CD8-positive, alpha-beta memory T cell (primary cell): ENCODE measurements at regions of chr6 and their contacts with region 1.

Region 1: DNA sequence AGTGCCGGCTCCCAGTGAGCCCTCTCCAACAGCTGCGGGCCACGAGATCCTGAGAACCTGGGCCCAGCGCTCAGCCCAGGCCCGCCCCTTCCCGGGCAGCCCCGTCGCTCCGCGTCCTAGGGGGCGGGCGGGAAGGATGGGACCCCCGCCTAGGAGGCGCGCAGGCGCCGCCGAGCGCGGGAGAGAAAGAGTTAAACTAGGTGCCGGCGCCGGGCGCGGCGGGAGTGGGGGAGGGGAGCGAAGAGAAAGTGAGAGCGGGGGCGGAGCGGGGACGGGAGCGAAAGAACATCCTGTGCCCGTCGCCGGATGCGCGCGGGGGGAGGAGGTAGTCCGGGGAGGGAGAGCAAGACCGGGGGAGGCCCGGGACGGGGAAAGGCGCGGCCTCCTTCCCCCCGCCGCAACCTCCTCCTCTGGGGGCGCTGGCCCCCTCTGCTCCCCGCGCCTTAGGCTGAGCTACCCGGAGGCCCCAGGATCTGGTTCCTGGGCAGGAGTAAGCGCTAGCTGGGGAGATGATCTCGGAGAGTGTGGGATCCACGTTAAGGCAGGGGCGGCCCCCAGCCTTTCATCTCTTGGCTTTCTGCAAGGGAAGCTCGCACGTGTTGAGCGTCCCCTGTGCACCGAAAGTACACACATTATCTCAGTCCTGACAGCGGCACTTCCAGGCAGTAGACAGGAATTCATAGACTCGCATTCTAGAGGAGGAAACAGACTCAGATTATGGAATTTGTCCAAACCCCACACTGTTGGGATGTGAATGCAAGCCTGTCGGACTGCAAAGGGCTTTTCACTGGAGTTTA is 4.9 kb upstream of the ARMC12 start:
- DNase-seq: peak; percentile 88 to 97 (median 92)
- H3K4me3 ChIP-seq: peak overlapping the region; percentile 80
- H3K4me3 Mint-ChIP-seq: peak overlapping the region; percentile 84 to 94 (median 88)
- H3K27ac ChIP-seq: peak overlapping the region; percentile 87
- H3K27ac Mint-ChIP-seq: peak overlapping the region; percentile 88 to 98 (median 96)
- H3K4me1 ChIP-seq: peaks cover 82% of the 10 kb centered on the region
- H3K4me1 Mint-ChIP-seq: peaks cover 66 to 91% (median 74%) of the 10 kb centered on the region in 3 donors
- H3K27me3 ChIP-seq: no peaks in the 10 kb centered on the region
- H3K27me3 Mint-ChIP-seq: peaks cover 0 to 4% of the 10 kb centered on the region in 2 donors

Region 2: DNA sequence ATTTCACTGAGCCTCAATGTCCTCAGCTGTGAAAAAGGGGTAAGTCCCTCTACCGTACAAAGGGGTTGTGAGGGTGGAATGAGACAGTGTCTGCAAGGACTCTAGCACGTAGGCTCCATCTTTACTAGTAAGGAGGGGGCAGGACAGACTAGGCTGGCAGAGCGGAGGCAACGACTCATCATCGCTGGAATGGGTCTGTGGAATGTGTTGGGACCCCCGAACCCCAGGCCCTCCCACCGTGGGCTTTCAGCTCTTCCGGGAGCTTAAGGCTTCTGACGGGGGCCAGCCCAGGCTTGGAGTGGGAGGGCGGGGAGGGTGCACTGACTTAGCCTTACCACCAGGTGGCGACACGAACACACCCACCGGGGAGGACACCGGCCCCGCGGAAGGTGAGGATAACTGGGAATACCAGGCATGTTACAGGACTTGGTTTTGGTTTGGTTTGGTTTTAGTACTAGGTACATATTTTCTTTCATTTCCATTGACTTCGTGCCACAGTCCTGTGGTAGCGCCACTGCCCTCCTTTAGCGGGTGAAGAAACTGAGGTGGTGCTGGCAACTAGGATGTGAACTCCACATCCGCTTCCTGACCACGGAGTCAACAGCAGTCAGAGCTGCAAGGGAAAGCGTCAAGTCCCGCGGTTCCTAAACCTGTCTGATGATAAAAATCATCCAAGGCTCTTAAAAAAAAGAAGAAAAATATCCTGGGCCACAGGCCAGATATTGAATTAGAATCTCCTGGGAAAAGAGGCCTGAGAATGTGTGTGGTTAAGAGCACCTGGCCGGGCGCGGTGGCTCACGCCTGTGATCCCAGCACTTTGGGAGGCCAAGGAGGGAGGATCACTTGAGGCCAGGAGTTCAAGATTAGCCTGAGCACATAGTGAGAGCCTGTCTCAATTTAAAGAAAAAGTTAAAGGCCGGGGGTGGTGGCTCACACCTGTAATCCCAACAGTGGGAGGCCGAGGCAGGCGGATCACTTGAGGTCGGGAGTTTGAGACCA is 209.0 kb before region 1 on chr6:
- CTCF ChIA-PET with region 1: interaction called, 47 read pairs
- POLR2A ChIA-PET with region 1: no interaction called
- DNase-seq: peak; percentile 67 to 85 (median 77)
- H3K4me3 ChIP-seq: peak overlapping the region; percentile 26
- H3K4me3 Mint-ChIP-seq: peak overlapping the region; percentile 25 to 79 (median 71)
- H3K27ac ChIP-seq: no peak overlapping the region
- H3K27ac Mint-ChIP-seq: peak overlapping the region; percentile 48 to 95 (median 88)
- H3K4me1 ChIP-seq: peaks cover 27% of the 10 kb centered on the region
- H3K4me1 Mint-ChIP-seq: peaks cover 24 to 31% (median 30%) of the 10 kb centered on the region in 3 donors
- H3K27me3 ChIP-seq: no peaks in the 10 kb centered on the region
- H3K27me3 Mint-ChIP-seq: peaks cover 0 to 2% of the 10 kb centered on the region in 2 donors

Region 3: GRCh38 chr6:35576682-35577081 is 155.3 kb before region 1 on chr6:
- CTCF ChIA-PET with region 1: interaction called, 59 read pairs
- POLR2A ChIA-PET with region 1: no interaction called
- DNase-seq: no peak
- H3K4me3 ChIP-seq: no peak overlapping the region
- H3K4me3 Mint-ChIP-seq: no peak overlapping the region
- H3K27ac ChIP-seq: no peak overlapping the region
- H3K27ac Mint-ChIP-seq: no peak overlapping the region
- H3K4me1 ChIP-seq: peaks cover 2% of the 10 kb centered on the region
- H3K4me1 Mint-ChIP-seq: peaks cover 0 to 4% (median 4%) of the 10 kb centered on the region in 3 donors
- H3K27me3 ChIP-seq: no peaks in the 10 kb centered on the region
- H3K27me3 Mint-ChIP-seq: no peaks in the 10 kb centered on the region

Region 4: GRCh38 chr6:35601331-35602132 is 130.4 kb before region 1 on chr6:
- CTCF ChIA-PET with region 1: interaction called, 74 read pairs
- POLR2A ChIA-PET with region 1: interaction called, 23 read pairs
- DNase-seq: peak; percentile 23 to 92 (median 83)
- H3K4me3 ChIP-seq: peak overlapping the region; percentile 58
- H3K4me3 Mint-ChIP-seq: peak overlapping the region; percentile 76 to 85 (median 81)
- H3K27ac ChIP-seq: peak overlapping the region; percentile 44
- H3K27ac Mint-ChIP-seq: peak overlapping the region; percentile 71 to 97 (median 86)
- H3K4me1 ChIP-seq: peaks cover 83% of the 10 kb centered on the region
- H3K4me1 Mint-ChIP-seq: peaks cover 69 to 92% (median 84%) of the 10 kb centered on the region in 3 donors
- H3K27me3 ChIP-seq: no peaks in the 10 kb centered on the region
- H3K27me3 Mint-ChIP-seq: no peaks in the 10 kb centered on the region

Region 5: DNA sequence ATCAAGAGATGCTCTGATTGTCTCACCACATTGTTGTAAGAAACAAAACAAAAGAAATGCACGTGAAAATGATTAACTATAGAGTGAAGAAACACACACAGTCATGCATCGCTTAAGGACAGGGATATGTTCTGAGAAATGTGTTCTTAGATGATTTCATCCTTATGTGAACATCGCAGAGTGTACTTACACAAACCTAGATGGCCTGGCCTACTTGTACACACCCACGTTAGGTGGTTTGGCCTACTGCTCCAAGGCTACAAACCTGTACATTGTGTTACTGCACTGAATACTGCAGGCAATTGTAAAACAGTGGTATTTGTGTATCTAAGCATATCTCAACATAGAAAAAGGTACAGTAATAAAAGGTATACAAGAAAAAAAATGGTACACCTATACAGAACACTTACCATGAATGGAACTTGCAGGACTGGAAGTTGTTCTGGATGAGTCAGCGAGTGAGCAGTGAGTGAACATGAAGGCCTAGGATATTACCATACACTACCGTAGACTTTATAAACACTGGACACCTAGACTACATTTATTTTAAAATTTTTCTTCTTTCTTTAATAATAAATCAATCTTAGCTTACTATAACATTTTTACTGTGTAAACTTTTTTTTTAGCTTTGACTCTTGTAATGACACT is 91.8 kb before region 1 on chr6:
- CTCF ChIA-PET with region 1: interaction called, 28 read pairs
- POLR2A ChIA-PET with region 1: interaction called, 3 read pairs
- DNase-seq: no peak
- H3K4me3 ChIP-seq: no peak overlapping the region
- H3K4me3 Mint-ChIP-seq: no peak overlapping the region
- H3K27ac ChIP-seq: no peak overlapping the region
- H3K27ac Mint-ChIP-seq: peak overlapping the region in 2 of 8 donors; percentile 58 to 73
- H3K4me1 ChIP-seq: peaks cover 32% of the 10 kb centered on the region
- H3K4me1 Mint-ChIP-seq: peaks cover 31 to 55% (median 46%) of the 10 kb centered on the region in 3 donors
- H3K27me3 ChIP-seq: no peaks in the 10 kb centered on the region
- H3K27me3 Mint-ChIP-seq: no peaks in the 10 kb centered on the region

Region 6: DNA sequence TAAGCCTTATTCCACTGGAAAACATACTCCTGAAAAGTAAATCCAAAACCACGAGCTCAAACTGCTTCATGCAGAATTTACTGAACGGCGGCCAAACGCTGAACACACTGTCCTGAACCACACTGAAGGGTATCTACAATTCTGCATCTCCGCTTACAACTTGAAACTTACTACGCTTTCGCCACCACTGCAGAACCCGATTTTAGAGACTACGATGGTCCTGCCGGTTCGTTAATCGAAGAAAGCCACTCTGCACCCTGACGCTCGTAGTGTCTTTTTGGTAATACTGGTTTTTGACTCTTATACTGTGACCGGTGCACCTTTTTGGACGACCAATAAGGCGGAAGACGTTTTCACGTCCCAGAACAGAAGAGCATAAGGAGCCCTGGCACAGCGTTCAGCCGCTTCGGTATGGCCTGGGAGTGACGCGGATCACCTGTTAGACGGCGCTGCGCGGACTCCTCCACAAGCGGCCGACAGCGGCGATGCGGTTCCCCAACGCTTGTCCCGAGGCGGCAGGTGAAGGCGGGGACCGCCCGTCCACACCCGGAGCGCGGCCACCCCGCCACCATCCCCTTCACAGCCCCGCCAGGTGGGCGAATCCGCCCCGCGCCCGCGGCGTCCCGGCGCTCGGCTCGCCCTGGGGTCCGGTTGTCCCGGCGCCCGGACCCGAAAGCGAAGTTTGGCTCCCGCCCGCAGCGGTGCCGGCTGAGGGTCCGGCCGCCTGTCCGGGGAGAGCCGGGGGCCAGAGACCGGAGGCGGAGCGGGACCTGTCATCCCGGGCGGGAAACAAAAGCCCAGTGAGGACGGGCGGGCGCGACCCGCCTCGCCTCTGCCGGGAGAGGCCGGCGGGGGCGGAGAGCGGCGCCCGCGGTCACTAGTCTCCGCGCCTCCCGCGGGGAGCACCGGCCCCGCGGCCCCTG is 44.0 kb before region 1 on chr6:
- CTCF ChIA-PET with region 1: interaction called, 16 read pairs
- POLR2A ChIA-PET with region 1: interaction called, 15 read pairs
- DNase-seq: peak; percentile 34 to 64 (median 46)
- H3K4me3 ChIP-seq: peak overlapping the region; percentile 89
- H3K4me3 Mint-ChIP-seq: peak overlapping the region; percentile 92 to 100 (median 97)
- H3K27ac ChIP-seq: peak overlapping the region; percentile 67
- H3K27ac Mint-ChIP-seq: peak overlapping the region; percentile 61 to 99 (median 94)
- H3K4me1 ChIP-seq: peaks cover 7% of the 10 kb centered on the region
- H3K4me1 Mint-ChIP-seq: peaks cover 17 to 33% (median 27%) of the 10 kb centered on the region in 3 donors
- H3K27me3 ChIP-seq: no peaks in the 10 kb centered on the region
- H3K27me3 Mint-ChIP-seq: no peaks in the 10 kb centered on the region